Activated B cell treated with CpG ODN at 0.5 μM for 24 hours (primary cell): ENCODE measurements at regions of chr12 and their contacts with region 1.

Region 1: DNA sequence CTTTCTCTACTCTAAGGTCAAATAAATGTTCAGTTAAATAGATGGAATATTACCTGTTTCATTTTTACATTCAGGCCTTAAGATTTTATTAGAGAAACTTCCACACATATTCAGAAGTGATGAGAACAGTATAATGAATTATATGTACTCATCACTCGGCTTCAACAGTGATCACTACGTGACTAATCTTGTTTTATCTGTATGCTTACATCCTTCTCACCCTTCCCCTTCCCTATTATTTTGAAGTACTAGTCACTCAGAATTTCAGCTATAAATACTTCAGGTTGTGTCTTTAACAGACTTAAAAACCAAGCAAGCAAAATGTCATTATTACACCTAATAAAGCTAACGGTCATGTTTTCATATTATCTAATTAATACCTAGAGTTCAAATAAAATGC is 34.9 kb downstream of the ETV6 start:
- DNase-seq: no peak
- ATAC-seq: no peak
- H3K4me3 Mint-ChIP-seq: no peak overlapping the region
- H3K27ac Mint-ChIP-seq: no peak overlapping the region
- H3K4me1 Mint-ChIP-seq: peaks cover 69% of the 10 kb centered on the region
- H3K27me3 Mint-ChIP-seq: no peaks in the 10 kb centered on the region
- CTCF ChIP-seq: no peak

Region 2: DNA sequence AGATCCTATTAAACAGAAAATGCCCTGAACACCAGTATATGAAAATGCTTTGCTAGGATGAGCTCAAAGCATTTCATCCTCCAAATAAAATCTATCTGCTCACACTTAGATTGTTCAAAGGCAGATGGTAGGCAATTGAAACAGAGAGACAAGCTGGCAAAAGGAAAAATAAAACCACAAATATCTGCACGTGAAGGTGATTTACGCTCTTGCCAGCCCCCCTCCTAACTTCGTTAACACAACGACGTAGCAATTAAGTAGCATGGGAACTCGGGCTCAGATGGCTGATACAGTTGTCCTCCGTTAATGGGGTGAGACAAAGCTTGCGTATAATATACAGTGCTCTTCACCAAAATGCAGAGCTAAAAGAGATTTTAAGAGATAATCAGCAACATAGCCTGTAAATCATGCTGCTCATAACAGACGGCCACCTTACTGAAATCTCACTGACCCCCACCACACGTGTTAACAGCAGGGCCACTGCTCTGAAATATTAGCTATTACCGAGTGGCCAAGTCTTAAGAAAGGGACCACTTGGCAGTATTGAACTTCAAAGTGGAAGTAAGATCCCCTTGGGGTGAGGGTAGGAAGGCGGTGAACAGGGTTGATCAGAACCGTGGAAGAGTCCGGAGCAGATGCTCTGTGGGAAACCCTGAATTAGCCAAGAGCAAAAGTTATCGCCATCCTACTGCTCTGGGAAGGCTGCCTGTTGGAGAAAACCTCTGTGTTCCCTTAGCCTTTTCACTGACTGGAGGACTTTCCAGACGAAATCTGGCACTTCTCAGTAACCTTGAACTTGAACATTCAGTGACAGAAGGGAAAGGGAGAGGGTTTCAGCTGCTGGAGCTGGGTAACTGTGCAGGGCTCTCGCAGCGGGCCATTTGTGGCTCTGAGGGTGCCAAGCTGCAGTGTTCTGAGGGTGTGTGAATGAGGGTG is 11.9 kb before region 1 on chr12:
- CTCF ChIA-PET with region 1: no interaction called
- POLR2A ChIA-PET with region 1: no interaction called
- intact Hi-C with region 1: loop called (anchors 2 kb)
- DNase-seq: no peak
- ATAC-seq: no peak
- H3K4me3 Mint-ChIP-seq: no peak overlapping the region
- H3K27ac Mint-ChIP-seq: no peak overlapping the region
- H3K4me1 Mint-ChIP-seq: peaks cover 78% of the 10 kb centered on the region
- H3K27me3 Mint-ChIP-seq: no peaks in the 10 kb centered on the region
- CTCF ChIP-seq: no peak

Region 3: DNA sequence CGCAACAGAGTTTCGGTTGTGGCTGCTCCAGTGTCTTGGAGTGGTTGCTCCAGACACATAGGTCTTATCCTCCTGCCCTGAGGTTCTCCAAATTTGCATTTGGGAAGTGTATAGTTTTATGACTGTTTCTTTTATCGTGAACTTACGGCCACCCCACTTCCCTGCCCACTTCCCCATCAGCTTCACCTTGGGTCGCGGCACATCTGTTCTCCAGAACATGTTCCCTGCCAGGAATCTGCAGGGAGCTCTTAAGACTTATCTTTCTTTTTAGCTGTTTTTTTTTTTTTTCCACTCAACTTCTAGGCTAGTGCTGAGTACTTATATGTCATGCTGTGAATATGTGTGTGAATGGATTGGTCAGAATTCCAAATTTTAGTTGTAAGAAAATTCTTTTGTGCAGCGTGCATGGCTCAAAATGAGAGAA is 40.5 kb after region 1 on chr12:
- CTCF ChIA-PET with region 1: no interaction called
- POLR2A ChIA-PET with region 1: interaction called, 4 read pairs
- intact Hi-C with region 1: loop called (anchors 5 kb)
- DNase-seq: no peak
- ATAC-seq: no peak
- H3K4me3 Mint-ChIP-seq: no peak overlapping the region
- H3K27ac Mint-ChIP-seq: no peak overlapping the region
- H3K4me1 Mint-ChIP-seq: peaks cover 88% of the 10 kb centered on the region
- H3K27me3 Mint-ChIP-seq: no peaks in the 10 kb centered on the region
- CTCF ChIP-seq: no peak